ENCODE measurements at regions of chr2 and their contacts with region 1.

Region 1: GRCh38 chr2:178128836-178129630 is 16.8 kb downstream of the RBM45 start:
- DNase-seq: no peak
- H3K4me3 ChIP-seq: no peak overlapping the region
- H3K27ac ChIP-seq: no peak overlapping the region
- H3K27me3 ChIP-seq: no peaks in the 10 kb centered on the region
- CTCF ChIP-seq: no peak

Region 2: GRCh38 chr2:177842243-177842642 is 286.8 kb before region 1 on chr2:
- CTCF ChIA-PET with region 1: no interaction called
- POLR2A ChIA-PET with region 1: no interaction called
- DNase-seq: no peak
- H3K4me3 ChIP-seq: no peak overlapping the region
- H3K27ac ChIP-seq: no peak overlapping the region
- H3K27me3 ChIP-seq: no peaks in the 10 kb centered on the region
- CTCF ChIP-seq: no peak

Region 3: DNA sequence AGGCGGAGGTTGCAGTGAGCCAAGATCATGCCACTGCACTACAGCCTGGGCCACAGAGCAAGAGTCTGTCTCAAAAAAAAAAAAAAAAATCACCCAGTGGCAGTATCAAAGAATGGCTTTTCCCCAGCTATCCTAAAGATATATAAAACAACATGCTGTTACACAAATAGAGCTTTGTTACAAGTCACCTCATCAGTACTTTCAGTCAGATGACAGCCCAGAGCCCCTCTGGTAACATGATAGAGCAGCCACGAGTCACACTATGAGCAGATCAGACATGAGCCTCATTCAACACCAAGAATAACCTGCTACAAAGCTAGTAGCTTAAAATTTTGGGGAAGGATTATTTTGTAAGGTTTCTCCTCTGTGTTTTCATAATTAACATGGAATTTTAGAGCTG is 81.6 kb before region 1 on chr2:
- CTCF ChIA-PET with region 1: no interaction called
- POLR2A ChIA-PET with region 1: no interaction called
- DNase-seq: no peak
- H3K4me3 ChIP-seq: no peak overlapping the region
- H3K27ac ChIP-seq: no peak overlapping the region
- H3K27me3 ChIP-seq: peaks cover 4% of the 10 kb centered on the region
- CTCF ChIP-seq: no peak

Region 4: DNA sequence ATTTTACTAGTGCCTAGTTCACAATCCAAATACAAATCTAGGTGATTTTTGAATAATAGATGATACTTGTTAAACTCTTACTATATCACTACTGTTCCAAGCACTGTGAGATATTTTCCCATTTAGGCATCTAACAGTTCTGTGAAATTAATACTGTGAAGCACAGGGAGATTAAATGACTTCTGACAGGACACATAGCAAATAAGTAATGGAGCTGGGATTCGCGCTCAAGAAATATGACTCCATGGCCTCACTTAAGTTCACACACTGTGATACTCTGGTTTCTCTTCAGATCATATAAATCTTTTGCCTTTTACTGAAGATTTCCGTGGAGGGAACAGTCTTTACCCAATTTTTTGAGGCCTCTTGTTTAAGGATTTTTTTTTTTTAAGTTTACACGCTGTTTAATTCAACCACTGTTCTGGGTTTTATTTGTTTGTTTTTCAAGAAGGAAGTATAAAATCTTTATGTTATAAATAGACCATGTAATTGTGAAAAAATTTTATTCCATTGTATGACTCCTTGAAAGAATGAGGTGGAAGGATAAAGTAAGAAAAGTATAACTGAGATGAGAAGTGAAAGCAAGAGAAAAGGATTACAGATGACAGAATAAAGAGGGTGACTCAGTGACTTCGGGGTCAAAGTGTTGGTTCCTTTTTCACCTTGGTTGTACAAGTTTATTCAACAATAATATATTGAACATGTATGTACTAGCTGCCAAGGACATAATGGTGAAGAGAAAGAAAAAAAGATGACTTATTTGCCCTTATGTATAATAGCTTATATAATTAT is 13.4 kb after region 1 on chr2:
- CTCF ChIA-PET with region 1: interaction called, 27 read pairs
- POLR2A ChIA-PET with region 1: no interaction called
- DNase-seq: no peak
- H3K4me3 ChIP-seq: no peak overlapping the region
- H3K27ac ChIP-seq: no peak overlapping the region
- H3K27me3 ChIP-seq: no peaks in the 10 kb centered on the region
- CTCF ChIP-seq: no peak